ENCODE measurements at regions of chr6 and their contacts with region 1.

Region 1: GRCh38 chr6:83057705-83058321 is 7.8 kb downstream of the UBE3D start:
- DNase-seq: no peak
- ATAC-seq: no peak
- H3K4me3 ChIP-seq: no peak overlapping the region
- H3K27ac ChIP-seq: no peak overlapping the region
- H3K4me1 ChIP-seq: no peaks in the 10 kb centered on the region
- H3K27me3 ChIP-seq: no peaks in the 10 kb centered on the region
- CTCF ChIP-seq: peak in 3 of 5 experiments; percentile 22 to 51 (median 46)
- POLR2A ChIP-seq: no peak

Region 2: DNA sequence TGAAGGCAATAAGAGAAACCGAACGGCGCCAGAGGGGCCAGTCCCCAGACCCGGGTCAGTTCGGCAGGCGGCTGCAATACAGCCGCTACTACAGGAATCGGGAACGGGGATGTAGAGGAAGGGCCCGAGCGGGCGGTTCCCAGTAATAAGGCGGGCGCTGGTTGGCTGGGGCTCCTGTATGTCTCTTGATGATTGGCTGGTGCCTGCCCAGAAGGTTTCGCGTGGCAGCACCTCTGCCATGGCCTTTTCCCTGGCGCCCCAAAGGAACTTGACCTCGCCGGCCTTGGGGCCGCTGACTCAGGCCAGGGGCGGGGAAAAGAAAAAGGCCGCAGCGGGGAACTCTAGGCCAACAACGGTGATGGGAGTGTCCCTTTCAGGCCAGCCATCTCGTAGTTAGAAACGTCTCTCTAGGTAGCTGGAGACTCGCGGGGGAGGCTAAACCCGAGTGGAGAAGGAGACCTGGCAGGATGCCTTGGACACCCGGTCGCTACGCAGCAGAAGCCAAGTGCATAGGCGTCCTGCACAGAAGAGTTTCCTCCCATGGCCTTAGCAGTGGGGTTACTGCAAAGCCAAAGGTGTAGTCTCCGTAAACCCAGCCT is 810.1 kb before region 1 on chr6 and contains the start of gene IBTK:
- in situ Hi-C with region 1: loop called in 1 of 4 experiments (anchors 10 kb)
- intact Hi-C with region 1: loop called (anchors 5 kb)
- DNase-seq: peak; percentile 94 to 97
- ATAC-seq: peak; percentile 92 to 95
- H3K4me3 ChIP-seq: peak within 1 kb of the TSS; percentile 79 to 98 (median 86)
- H3K27ac ChIP-seq: peak within 1 kb of the TSS; percentile 89 to 98 (median 92)
- H3K4me1 ChIP-seq: peaks cover 31 to 44% of the 10 kb centered on the region in 2 donors
- H3K27me3 ChIP-seq: no peaks in the 10 kb centered on the region
- CTCF ChIP-seq: no peak
- POLR2A ChIP-seq: peak; percentile 71 to 76
- total RNA-seq, gene IBTK: 26.2 to 31.7 (median 29.5) TPM

Region 3: DNA sequence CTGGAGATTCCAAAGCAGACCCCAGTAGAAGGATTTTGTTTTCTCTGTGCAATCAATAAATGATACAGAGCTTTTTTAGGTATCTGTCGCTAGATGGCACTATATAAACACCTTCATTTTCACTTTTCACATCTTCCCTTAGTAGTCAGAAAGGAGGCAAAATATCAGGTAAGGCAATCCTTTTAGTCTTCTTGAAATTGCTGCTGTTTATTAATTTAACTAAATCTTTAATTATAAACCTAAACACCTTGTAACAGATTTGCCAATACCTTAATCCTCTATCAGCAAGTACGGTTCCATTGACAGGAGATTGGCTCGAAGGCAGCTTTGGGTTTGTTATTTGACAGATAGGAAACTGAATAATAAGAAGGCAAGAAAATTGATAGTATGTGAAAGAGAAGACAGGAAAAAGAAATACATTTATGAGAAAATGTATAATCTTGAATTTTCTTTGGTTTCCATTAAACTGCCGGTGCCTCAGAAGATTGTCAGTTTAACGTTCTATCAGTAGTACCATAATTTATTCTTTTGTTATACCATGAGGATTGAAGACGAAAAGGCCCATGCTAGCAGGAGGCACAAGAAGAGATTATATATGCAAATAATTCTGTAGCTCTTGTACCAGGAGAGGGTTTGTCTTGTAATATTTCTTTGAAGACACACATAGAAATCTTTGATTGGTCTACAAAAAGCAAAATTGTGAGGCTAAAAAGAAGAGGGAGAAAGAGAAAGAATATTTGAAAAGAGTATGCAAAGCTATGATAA is 786.8 kb before region 1 on chr6:
- in situ Hi-C with region 1: loop called in 3 of 4 experiments (anchors 5 to 10 kb)
- intact Hi-C with region 1: loop called (anchors 1 kb)
- DNase-seq: no peak
- ATAC-seq: no peak
- H3K4me3 ChIP-seq: no peak overlapping the region
- H3K27ac ChIP-seq: no peak overlapping the region
- H3K4me1 ChIP-seq: no peaks in the 10 kb centered on the region
- H3K27me3 ChIP-seq: no peaks in the 10 kb centered on the region
- CTCF ChIP-seq: peak in 4 of 5 experiments; percentile 22 to 61 (median 42)
- POLR2A ChIP-seq: no peak

Measured in gastrocnemius medialis (tissue), 4 donors.